ENCODE measurements at regions of chr7 and their contacts with region 1.

Region 1: GRCh38 chr7:54354436-54354835 is 187.7 kb upstream of the VSTM2A start:
- DNase-seq: no peak
- ATAC-seq: no peak
- H3K4me3 ChIP-seq: no peak overlapping the region
- H3K27ac ChIP-seq: no peak overlapping the region
- H3K4me1 ChIP-seq: no peaks in the 10 kb centered on the region
- H3K27me3 ChIP-seq: no peaks in the 10 kb centered on the region
- CTCF ChIP-seq: no peak
- POLR2A ChIP-seq: no peak

Region 2: GRCh38 chr7:54201501-54201900 is 152.9 kb before region 1 on chr7:
- intact Hi-C with region 1: no loop called
- DNase-seq: no peak
- ATAC-seq: no peak
- H3K4me3 ChIP-seq: no peak overlapping the region
- H3K27ac ChIP-seq: no peak overlapping the region
- H3K4me1 ChIP-seq: no peaks in the 10 kb centered on the region
- H3K27me3 ChIP-seq: no peaks in the 10 kb centered on the region
- CTCF ChIP-seq: no peak
- POLR2A ChIP-seq: no peak

Region 3: DNA sequence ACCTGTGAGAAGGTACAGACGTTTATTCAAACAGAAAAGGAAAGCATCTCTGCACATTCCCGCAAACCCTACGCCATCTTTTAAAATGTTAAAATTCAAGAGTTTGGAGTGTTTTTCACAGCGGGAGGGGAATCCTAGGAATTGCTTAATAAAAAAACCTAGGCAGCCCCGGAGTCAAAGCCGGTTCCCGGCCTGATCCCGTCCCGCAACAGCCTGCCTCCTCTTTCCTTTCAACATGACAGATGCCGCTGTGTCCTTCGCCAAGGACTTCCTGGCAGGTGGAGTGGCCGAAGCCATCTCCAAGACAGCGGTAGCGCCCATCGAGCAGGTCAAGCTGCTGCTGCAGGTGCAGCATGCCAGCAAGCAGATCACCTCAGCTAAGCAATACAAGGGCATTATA is 64.8 kb after region 1 on chr7:
- intact Hi-C with region 1: loop called in 1 of 10 experiments (anchors 10 kb)
- DNase-seq: peak in 1 of 5 donors; percentile 40
- ATAC-seq: no peak
- H3K4me3 ChIP-seq: no peak overlapping the region
- H3K27ac ChIP-seq: no peak overlapping the region
- H3K4me1 ChIP-seq: no peaks in the 10 kb centered on the region
- H3K27me3 ChIP-seq: no peaks in the 10 kb centered on the region
- CTCF ChIP-seq: no peak
- POLR2A ChIP-seq: no peak

Region 4: DNA sequence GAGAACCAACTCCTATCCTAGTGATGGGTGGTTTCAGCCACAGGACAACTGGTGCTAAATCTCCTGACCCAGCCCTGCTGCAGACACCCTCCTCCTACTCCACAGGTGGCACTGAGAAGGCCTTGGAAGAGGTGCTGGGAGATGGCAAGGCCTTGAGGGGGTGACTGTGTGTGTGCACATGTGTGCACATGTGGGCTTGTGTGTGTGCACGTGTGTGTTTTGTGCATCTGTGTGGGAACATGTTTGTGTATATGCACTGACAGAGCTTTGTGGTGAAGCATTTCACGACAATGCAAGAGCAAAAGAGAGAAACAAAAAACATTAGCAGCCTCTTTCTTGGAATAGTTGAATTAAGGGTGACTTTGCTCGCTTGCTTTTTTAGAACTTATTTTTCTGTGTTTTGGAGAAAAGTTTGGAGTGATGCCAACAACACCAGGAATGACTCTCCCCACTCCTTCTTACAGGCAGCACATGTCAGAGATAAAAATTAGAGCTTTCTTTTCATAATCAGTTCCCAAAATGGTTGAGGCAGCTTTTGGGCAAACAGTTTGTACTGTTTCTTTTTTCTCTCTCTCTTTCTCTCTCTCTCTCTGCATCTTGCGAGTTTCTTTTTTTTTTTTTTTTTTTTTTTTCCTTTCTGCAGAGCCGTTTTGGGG is 335.1 kb after region 1 on chr7:
- intact Hi-C with region 1: no loop called
- DNase-seq: no peak
- ATAC-seq: no peak
- H3K4me3 ChIP-seq: peak overlapping the region in 2 of 12 donors; percentile 7 to 18
- H3K27ac ChIP-seq: no peak overlapping the region
- H3K4me1 ChIP-seq: no peaks in the 10 kb centered on the region
- H3K27me3 ChIP-seq: no peaks in the 10 kb centered on the region
- CTCF ChIP-seq: no peak
- POLR2A ChIP-seq: no peak